ENCODE measurements at regions of chr1 and their contacts with region 1.

Region 1: GRCh38 chr1:53485478-53486394 is 26.5 kb downstream of the DMRTB1 start:
- DNase-seq: peak; percentile 73 to 80
- ATAC-seq: peak; percentile 94 to 98
- H3K4me3 ChIP-seq: no peak overlapping the region
- H3K27ac ChIP-seq: peak overlapping the region in 1 of 2 experiments; percentile 69; a peak in 3 of 6 replicates
- H3K4me1 ChIP-seq: no peaks in the 10 kb centered on the region
- CTCF ChIP-seq: peak; percentile 72
- EP300 ChIP-seq: no peak
- POLR2A ChIP-seq: no peak
- RAD21 ChIP-seq: peak; percentile 87 to 92

Region 2: GRCh38 chr1:53465080-53465479 is 20.7 kb before region 1 on chr1:
- CTCF ChIA-PET with region 1: interaction called, 15 read pairs
- POLR2A ChIA-PET with region 1: no interaction called
- DNase-seq: no peak
- ATAC-seq: no peak
- H3K4me3 ChIP-seq: no peak overlapping the region
- H3K27ac ChIP-seq: no peak overlapping the region
- H3K4me1 ChIP-seq: no peaks in the 10 kb centered on the region
- CTCF ChIP-seq: no peak
- EP300 ChIP-seq: no peak
- POLR2A ChIP-seq: no peak
- RAD21 ChIP-seq: no peak

Region 3: DNA sequence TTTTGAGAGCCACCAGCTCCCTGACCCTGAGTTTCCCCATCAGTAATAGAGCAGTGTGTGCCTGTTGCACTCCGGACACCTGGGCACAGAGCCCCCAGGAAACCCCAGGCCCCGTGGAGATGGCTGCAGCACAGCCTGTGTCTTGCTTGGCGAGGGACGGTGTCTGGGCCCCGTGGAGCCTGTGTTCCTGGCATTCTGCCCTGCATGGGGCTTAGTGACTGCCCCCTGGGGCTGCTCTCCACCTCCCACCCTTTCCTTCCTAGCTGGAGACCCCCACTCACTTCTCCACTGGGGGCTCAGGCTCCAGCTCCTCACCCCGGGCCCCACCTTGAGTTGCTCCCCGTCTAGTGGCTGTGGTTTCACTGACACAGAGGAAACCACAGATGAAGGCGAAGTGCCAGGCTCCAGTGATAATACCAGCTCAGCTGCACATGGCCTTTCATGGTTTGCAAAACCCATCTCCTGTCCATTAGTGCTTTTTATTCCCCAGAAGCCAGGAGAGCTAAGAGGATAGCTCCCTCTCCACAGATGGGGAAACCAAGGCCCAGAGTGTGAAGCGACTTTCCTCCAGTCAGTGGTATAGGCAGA is 12.9 kb after region 1 on chr1:
- CTCF ChIA-PET with region 1: interaction called, 26 read pairs
- POLR2A ChIA-PET with region 1: no interaction called
- DNase-seq: no peak
- ATAC-seq: no peak
- H3K4me3 ChIP-seq: no peak overlapping the region
- H3K27ac ChIP-seq: no peak overlapping the region
- H3K4me1 ChIP-seq: no peaks in the 10 kb centered on the region
- CTCF ChIP-seq: no peak
- EP300 ChIP-seq: no peak
- POLR2A ChIP-seq: no peak
- RAD21 ChIP-seq: no peak

Region 4: DNA sequence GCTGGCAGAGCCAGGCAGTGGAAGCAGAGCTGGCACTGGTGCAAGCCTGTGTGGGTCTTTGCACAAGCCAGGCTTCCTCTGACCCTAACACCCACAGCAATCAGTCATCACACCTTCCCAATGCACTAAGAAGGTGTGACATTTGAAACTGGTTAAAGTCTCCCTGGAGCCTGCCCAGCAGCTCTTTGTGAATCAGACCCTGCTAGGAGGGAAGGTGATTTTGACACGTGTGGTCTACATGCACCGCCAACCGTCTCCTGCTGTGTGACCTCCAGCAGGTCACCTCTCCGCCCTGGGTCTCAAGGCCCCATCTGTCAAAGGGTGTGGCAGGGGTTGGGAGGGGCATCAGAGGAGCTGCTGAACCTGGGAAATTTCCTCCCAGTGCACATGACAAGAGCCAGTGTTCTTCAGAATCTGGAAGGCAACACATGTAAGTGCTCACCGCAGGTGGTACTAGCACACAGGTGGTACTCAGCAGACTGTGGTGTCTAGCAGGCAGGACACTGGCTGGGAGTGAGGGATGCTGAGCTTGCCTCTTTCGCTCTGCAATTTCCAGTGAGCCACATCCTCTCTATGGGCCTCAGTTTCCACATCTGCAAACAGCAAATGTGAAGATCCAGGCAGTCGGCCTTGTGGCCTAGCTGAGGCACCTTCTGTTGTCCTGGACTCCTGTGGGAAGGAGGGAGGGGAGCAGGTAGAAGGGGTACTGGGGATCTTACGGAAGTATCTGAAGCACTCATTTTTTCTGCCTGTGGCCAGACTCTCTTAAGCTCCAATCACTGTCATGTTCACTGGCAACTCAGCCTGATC is 96.7 kb after region 1 on chr1:
- CTCF ChIA-PET with region 1: interaction called, 12 read pairs
- POLR2A ChIA-PET with region 1: no interaction called
- DNase-seq: no peak
- ATAC-seq: no peak
- H3K4me3 ChIP-seq: no peak overlapping the region
- H3K27ac ChIP-seq: no peak overlapping the region
- H3K4me1 ChIP-seq: no peaks in the 10 kb centered on the region
- CTCF ChIP-seq: no peak
- EP300 ChIP-seq: no peak
- POLR2A ChIP-seq: no peak
- RAD21 ChIP-seq: no peak

Region 5: GRCh38 chr1:53681977-53682685 is 196.4 kb after region 1 on chr1:
- CTCF ChIA-PET with region 1: interaction called, 41 read pairs
- POLR2A ChIA-PET with region 1: no interaction called
- DNase-seq: peak; percentile 36 to 50
- ATAC-seq: peak; percentile 57 to 78; a peak in 3 of 6 replicates
- H3K4me3 ChIP-seq: no peak overlapping the region
- H3K27ac ChIP-seq: no peak overlapping the region
- H3K4me1 ChIP-seq: no peaks in the 10 kb centered on the region
- CTCF ChIP-seq: peak; percentile 34
- EP300 ChIP-seq: no peak
- POLR2A ChIP-seq: no peak
- RAD21 ChIP-seq: peak; percentile 46 to 52

Region 6: DNA sequence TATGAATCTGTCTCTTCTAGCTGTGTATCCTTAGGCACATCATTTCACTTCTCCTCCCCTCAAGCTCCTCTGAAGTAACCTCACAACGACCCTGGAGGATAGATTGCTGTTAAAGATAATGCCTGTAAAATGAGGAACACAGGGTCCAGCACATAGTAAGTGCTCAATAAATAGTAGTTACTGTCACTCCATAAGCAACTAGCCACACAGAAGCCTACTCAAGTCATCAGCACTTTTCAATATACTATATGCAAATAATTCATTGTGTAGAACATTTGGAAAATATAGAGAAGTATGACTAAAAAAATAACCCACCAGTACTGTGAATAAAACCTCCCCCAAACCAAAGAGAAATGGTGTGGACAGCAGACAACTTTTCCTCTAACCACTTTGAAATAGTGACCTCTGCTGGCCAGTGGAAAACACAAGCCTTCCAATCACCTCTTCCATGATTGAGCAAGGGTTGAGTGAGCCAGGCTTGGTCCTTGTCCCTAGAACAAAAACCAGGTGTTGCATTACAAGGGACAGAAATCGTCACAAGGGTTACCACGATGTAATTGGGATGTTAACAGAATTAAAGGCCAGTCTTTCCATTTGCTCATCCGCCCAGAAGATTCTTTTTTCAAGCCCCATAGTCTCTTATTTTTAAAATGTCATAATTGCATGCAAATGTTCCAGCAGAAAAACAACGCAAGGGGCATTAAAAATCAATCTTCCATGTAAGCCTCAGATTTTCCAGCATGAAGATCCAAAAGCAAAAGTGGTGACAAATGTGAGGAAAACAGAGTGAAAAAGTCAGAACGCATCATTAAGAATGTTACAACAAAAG is 269.0 kb after region 1 on chr1:
- CTCF ChIA-PET with region 1: interaction called, 40 read pairs
- POLR2A ChIA-PET with region 1: no interaction called
- DNase-seq: peak; percentile 39 to 48
- ATAC-seq: peak; percentile 81 to 85
- H3K4me3 ChIP-seq: no peak overlapping the region
- H3K27ac ChIP-seq: no peak overlapping the region
- H3K4me1 ChIP-seq: no peaks in the 10 kb centered on the region
- CTCF ChIP-seq: peak; percentile 74; the same call in 2 of the 3 replicates
- EP300 ChIP-seq: no peak
- POLR2A ChIP-seq: no peak
- RAD21 ChIP-seq: peak; percentile 64 to 66